Calu3 (cell line): ENCODE measurements at regions of chr3 and their contacts with region 1.

Region 1: DNA sequence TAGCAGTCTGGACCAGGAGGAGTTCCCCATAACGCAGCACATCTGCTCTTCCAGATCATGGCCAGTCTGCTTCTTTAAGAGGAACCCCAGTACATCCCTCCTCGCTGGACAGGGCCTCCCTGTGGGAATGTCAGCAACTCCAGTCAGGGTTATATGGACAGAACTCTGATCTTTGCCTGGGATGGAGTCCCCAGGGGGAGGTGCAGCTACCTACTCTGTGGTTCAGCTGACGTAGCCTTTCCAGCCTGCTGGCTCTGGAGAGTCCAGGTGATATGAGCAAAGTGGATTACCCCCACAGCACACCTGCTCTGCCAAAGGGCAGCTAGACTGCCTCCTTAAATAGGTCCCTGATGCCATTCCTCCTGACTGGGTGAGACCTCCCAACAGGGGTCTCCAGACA is 417.1 kb upstream of the EPHA3 start:
- DNase-seq: no peak
- H3K4me3 Mint-ChIP-seq: no peak overlapping the region
- H3K27ac Mint-ChIP-seq: no peak overlapping the region
- H3K4me1 Mint-ChIP-seq: peaks cover 8% of the 10 kb centered on the region
- H3K27me3 Mint-ChIP-seq: no peaks in the 10 kb centered on the region
- CTCF ChIP-seq: no peak

Region 2: DNA sequence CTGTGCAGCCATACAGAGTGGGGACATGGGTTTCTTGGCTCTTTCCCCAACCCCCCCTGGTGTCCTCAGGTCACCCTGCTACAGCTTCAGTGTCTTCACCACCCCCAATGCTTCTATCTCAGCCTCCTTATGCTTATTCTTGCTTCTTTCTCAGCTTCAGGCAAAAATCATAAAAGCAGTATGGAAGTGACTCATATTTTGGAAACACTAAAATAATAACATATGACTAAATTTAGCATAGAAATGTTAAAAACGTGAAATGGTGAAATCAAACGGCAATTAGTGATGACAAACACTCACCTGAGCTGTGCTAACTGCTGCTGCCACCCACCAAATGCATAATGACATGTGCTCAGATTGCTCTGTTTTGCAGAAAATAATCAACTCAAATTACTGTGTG is 58.1 kb before region 1 on chr3:
- CTCF ChIA-PET with region 1: no interaction called
- intact Hi-C with region 1: loop called (anchors 10 kb)
- DNase-seq: no peak
- H3K4me3 Mint-ChIP-seq: no peak overlapping the region
- H3K27ac Mint-ChIP-seq: no peak overlapping the region
- H3K4me1 Mint-ChIP-seq: peaks cover 6% of the 10 kb centered on the region
- H3K27me3 Mint-ChIP-seq: no peaks in the 10 kb centered on the region
- CTCF ChIP-seq: no peak